ENCODE measurements at regions of chr1 and their contacts with region 1.

Region 1: GRCh38 chr1:151993654-151994496 is at the start of gene S100A10:
- DNase-seq: peak; percentile 95
- H3K4me3 ChIP-seq: peak within 1 kb of the TSS; percentile 54 to 93 (median 89)
- H3K27ac ChIP-seq: peak within 1 kb of the TSS; percentile 97
- H3K4me1 ChIP-seq: peaks cover 66% of the 10 kb centered on the region
- H3K27me3 ChIP-seq: no peaks in the 10 kb centered on the region
- CTCF ChIP-seq: no peak
- total RNA-seq, gene S100A10: 213 to 2,371 TPM

Region 2: DNA sequence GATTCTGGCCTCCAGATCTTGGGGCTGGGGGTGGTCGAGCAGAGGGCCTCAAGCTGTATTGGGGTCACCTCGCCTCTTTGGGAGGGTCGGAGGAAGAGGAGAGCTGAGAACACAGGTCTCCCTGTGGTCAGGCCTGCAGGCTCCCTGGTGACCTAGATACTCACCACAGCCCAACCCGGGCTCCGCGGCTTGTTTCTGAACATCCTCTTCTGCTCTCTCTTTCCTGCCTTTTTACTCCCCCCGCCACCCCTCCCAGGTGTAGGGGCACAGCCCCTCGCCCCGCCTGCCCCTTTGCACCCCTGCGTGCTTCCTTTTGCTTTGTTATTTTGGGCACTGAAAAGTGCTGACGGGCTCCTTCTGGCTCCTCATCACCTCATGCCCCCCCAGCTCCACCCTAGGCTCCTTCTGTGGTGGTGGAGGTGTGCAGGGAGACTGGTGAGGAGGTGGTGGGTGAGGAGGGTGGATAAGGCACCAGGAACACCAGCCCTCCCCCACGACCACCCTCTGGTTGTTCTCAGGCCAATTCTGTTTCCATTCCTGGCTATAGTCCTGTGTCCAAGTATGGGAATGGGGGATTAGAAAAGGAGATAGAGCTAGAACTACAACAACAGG is 178.1 kb before region 1 on chr1:
- CTCF ChIA-PET with region 1: no interaction called
- dilution Hi-C with region 1: no loop called
- in situ Hi-C with region 1: no loop called
- intact Hi-C with region 1: no loop called
- DNase-seq: no peak
- H3K4me3 ChIP-seq: no peak overlapping the region
- H3K27ac ChIP-seq: no peak overlapping the region
- H3K4me1 ChIP-seq: no peaks in the 10 kb centered on the region
- H3K27me3 ChIP-seq: no peaks in the 10 kb centered on the region
- CTCF ChIP-seq: no peak

Region 3: DNA sequence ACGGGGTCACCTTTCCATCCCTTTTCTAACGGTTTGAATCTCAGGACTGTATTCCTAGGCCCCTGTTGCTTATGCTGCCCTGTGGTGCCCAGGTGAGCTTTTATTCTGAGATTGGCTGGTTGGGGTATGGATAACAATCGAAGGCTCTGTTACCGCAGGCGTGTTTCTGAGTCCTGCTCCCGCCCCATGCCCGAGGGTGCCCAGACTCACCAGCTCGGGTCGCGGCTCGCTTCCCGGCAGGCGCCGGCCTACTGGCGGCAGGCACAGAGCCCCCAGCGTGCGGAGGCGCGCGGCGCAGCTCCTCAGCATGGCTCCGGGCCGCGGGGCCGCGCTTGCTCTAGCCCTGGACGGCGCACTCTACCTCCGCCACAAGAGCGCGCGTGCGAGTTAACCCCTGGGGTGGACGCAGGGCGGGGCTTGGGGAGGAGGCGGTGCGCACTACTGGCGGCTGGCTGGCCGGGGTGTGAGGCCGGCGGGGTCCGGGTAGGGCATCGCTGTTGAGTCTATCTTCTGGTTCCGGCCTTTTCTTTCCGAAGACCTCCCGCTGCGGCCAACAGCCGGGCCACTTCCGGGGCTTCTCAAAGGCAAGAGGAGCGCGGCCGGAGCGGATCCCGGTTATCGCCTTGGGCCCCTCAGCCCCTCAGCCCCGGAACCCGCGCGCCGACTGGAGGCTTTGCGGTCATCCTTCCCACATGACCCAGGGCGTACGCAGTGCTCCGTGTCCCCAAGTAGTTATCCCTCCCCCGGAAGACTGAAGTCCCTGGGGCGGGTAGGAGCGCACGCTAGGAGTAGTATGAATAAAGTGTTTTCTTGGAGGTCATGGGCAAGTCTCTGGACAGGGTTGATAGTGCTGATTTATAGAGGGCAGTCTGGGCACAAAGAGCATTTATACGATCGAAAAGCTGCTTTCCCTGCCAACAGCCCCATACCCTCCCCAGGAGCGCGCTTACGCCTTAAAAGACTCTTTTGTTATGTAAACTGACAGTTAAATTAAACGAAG is 84.4 kb before region 1 on chr1 and contains the start of gene THEM4:
- CTCF ChIA-PET with region 1: no interaction called
- dilution Hi-C with region 1: no loop called
- in situ Hi-C with region 1: no loop called
- intact Hi-C with region 1: loop called (anchors 1 kb)
- DNase-seq: peak; percentile 96
- H3K4me3 ChIP-seq: peak within 1 kb of the TSS; percentile 73 to 81 (median 75)
- H3K27ac ChIP-seq: peak within 1 kb of the TSS; percentile 86
- H3K4me1 ChIP-seq: no peaks in the 10 kb centered on the region
- H3K27me3 ChIP-seq: no peaks in the 10 kb centered on the region
- CTCF ChIP-seq: no peak
- total RNA-seq, gene THEM4: 15.3 to 18.8 TPM

Region 4: GRCh38 chr1:151945725-151946364 is 48.0 kb before region 1 on chr1:
- CTCF ChIA-PET with region 1: no interaction called
- dilution Hi-C with region 1: loop called (anchors 5 kb)
- in situ Hi-C with region 1: loop called in 1 of 2 experiments (anchors 10 kb)
- intact Hi-C with region 1: loop called (anchors 1 kb)
- DNase-seq: peak; percentile 98
- H3K4me3 ChIP-seq: peak overlapping the region in 2 of 3 experiments; percentile 5 to 11
- H3K27ac ChIP-seq: peak overlapping the region; percentile 99
- H3K4me1 ChIP-seq: peaks cover 47% of the 10 kb centered on the region
- H3K27me3 ChIP-seq: no peaks in the 10 kb centered on the region
- CTCF ChIP-seq: no peak

Region 5: GRCh38 chr1:151968058-151968457 is 25.8 kb before region 1 on chr1:
- CTCF ChIA-PET with region 1: interaction called, 26 read pairs
- dilution Hi-C with region 1: no loop called
- in situ Hi-C with region 1: no loop called
- intact Hi-C with region 1: loop called (anchors 1 kb)
- DNase-seq: peak; percentile 52
- H3K4me3 ChIP-seq: no peak overlapping the region
- H3K27ac ChIP-seq: no peak overlapping the region
- H3K4me1 ChIP-seq: peaks cover 65% of the 10 kb centered on the region
- H3K27me3 ChIP-seq: no peaks in the 10 kb centered on the region
- CTCF ChIP-seq: peak; percentile 87 to 90

Region 6: DNA sequence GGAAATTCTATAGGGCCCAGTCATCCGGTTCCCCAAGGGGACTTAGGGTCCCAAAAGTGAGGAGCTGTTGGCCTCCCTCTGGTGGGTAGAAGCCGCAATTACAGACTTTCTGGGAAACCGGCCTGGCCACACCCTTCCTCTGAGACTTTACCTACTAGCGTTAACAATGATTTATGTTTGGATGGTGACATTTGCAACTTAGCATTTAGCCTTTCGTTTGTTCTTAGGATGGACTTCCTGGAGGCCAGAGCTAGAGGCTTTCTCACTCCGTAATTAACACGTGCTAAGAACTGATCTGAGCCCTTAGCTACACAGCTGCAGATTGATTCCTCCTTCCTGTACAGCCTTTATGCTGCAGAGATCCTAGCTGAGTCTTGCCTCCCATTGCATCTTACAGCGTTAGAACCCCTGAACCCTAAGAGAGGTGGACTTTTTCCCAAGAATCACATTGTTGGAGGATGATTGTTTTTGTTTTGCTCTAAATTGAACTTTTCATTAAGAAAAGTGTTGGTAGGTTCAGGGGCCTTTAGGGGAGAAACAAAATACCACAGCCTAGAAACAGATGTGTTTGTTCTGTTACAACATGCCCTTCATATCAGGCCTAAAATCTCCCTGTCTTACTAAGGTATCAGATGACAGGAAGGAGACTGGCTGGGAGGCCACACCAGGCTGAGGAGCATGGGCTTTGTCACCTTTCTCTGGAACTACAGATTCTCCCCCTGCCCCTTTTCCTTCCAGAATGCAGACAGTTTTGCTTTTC is 41.0 kb after region 1 on chr1:
- CTCF ChIA-PET with region 1: no interaction called
- dilution Hi-C with region 1: no loop called
- in situ Hi-C with region 1: no loop called
- intact Hi-C with region 1: loop called (anchors 1 kb)
- DNase-seq: peak; percentile 82
- H3K4me3 ChIP-seq: peak overlapping the region; percentile 90 to 99 (median 95)
- H3K27ac ChIP-seq: peak overlapping the region; percentile 95
- H3K4me1 ChIP-seq: peaks cover 23% of the 10 kb centered on the region
- H3K27me3 ChIP-seq: no peaks in the 10 kb centered on the region
- CTCF ChIP-seq: peak; percentile 71 to 81